OCI-LY7 (cell line): ENCODE measurements at regions of chr11 and their contacts with region 1.

Region 1: DNA sequence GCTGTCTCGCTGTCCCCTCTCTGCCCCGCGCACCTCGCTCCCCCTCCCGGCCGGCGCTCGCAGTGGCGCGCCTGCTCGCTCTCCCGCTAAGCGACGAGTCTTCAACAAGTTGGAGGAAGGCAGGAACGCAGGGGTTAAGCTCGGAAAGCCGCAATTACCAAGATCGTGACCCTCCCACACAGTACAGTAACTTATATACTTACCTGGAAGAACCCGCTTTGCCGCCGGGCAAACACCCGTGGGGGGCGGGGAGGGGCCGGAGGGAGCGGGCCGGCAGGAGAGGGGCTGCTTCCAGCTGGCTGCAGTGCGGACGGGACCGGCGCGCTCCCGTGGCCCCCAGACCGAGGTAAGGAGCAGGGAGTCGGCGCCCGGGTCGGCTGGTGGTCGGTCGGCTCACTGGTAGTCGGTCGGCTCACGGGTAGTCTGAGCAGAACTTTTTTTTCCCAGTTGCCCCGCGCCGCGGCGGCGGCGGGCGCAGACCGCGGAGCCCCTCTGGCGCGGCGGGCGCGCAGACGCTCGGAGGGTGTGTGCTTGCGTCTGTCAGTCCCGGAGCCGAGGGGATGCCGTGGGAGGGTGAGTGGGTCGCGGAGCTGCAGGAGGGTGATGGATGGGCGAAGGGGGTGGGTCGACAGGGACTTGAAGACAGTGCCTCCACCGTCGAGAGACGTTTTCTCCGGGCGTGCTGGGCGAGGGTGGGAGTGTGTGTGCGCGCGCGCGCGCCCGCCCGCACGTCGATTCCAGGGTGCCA is 101.2 kb upstream of the HSD17B12 start:
- DNase-seq: peak; percentile 35
- H3K4me3 ChIP-seq: peak overlapping the region; percentile 65
- H3K27ac ChIP-seq: no peak overlapping the region
- H3K4me1 ChIP-seq: peaks cover 5% of the 10 kb centered on the region
- CTCF ChIP-seq: peak; percentile 30; the same call in 1 of the 2 replicates

Region 2: DNA sequence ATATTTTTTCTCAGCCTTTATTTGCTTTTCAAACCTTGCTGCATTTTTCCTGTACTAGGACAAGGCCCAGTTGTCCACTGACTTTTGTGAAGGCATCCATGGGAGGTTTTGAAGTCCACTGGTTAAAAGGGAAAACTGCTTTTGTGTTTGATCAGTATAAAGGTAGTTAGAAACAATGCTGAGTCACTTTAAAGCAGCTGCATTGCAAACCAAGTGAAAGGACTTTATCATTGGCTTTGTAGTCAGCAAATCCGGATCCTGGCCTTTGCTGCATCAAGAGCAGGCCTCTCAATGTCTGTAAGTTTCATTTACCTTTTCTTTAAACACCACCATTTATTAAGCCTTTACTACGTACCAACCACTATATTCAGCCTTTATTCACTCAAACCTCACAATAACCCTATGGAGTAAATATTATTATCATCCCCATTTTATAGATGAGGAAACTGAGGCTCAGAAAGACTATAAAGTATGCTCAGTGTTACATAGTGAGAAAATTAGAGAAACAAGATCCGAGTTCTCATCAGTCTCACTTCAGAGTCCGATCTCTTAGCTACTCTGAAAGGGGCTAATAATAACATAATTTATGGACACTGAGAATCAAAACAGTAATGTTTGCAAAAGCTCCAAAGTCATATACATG is 40.6 kb after region 1 on chr11:
- CTCF ChIA-PET with region 1: interaction called, 19 read pairs
- POLR2A ChIA-PET with region 1: no interaction called
- intact Hi-C with region 1: no loop called
- DNase-seq: no peak
- H3K4me3 ChIP-seq: no peak overlapping the region
- H3K27ac ChIP-seq: no peak overlapping the region
- H3K4me1 ChIP-seq: no peaks in the 10 kb centered on the region
- CTCF ChIP-seq: no peak